ENCODE measurements at regions of chr12 and their contacts with region 1.

Region 1: GRCh38 chr12:5442251-5443006 is 10.5 kb downstream of the NTF3 start:
- DNase-seq: peak in 1 of 2 donors; percentile 59
- ATAC-seq: peak; percentile 63 to 89 (median 81)
- H3K4me3 ChIP-seq: no peak overlapping the region
- H3K27ac ChIP-seq: no peak overlapping the region
- H3K4me1 ChIP-seq: peaks cover 0 to 45% (median 15%) of the 10 kb centered on the region in 9 donors
- H3K27me3 ChIP-seq: peaks cover 0 to 13% (median 0%) of the 10 kb centered on the region in 7 donors
- CTCF ChIP-seq: peak; percentile 36 to 79 (median 66)

Region 2: DNA sequence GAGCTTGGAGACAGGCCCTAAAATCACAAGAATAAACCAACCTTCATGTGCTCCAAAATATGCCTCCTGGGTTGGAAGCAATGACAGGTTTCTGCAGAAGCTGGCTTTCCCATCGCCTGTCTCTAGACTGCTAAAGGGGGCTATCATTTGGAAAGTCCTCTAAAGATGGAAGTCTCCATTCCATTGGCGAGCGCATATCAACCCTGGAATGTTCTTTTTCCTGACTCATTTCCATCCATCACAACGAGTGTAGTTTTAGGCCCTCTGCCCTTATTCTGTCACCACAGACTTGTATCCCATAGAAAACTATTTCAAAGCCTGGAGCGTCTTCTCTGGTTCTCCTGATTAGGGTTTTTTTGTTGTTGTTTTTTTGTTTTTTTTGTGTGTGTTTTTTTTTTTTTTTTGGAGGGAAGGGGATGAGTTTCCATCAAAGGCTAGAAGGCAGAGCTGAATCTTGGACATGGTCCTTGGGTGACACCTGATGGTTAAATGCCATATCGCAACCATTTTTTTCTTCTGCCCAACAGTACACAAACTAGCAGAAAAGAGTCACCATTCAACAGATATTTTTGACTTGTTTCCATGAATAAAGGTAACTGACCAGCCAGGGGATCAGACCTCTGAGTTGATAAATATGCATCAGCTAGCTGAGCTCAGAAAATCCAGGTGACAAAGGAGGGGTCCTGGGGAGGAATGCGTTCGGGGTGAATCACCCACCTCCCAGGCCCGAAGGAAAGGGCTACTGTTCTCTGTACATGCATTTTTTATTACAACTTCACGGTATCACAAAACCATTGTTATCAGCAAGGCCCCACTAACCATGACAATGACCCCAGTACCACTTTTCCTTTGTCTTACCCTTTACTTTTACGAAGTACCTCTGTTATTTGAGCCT is 358.2 kb before region 1 on chr12:
- intact Hi-C with region 1: loop called in 1 of 10 experiments (anchors 5 kb)
- DNase-seq: peak in 1 of 2 donors; percentile 50
- ATAC-seq: peak in 6 of 8 donors; percentile 32 to 71 (median 54)
- H3K4me3 ChIP-seq: no peak overlapping the region
- H3K27ac ChIP-seq: no peak overlapping the region
- H3K4me1 ChIP-seq: peaks cover 0 to 5% (median under 1%) of the 10 kb centered on the region in 9 donors
- H3K27me3 ChIP-seq: peaks cover 0 to 4% (median 0%) of the 10 kb centered on the region in 7 donors
- CTCF ChIP-seq: peak; percentile 53 to 90 (median 82)

Region 3: DNA sequence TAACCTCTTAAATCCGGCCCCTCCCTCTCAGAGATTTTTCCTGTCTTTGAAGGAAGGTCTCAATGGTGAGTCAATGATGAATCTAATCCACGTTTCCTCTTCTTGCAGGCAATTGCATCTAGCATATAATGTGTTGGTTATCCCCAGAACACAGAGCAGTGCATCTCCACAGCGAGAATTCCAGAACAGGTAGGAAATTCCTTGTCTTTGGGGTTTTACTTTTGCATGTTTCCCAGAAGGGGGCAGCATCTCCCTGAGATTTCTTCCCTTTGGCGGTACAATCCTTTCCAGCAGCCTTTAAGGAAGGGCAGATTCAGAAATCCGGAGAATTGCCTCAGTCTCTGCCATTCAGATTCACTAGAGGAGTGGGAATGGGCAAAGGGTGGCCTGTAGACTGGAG is 270.7 kb before region 1 on chr12:
- intact Hi-C with region 1: loop called in 6 of 10 experiments (anchors 2 to 10 kb)
- DNase-seq: peak in 1 of 2 donors; percentile 23
- ATAC-seq: peak in 4 of 8 donors; percentile 13 to 54 (median 47)
- H3K4me3 ChIP-seq: no peak overlapping the region
- H3K27ac ChIP-seq: peak overlapping the region in 2 of 10 donors; percentile 42 to 79
- H3K4me1 ChIP-seq: peaks cover 0 to 26% (median 8%) of the 10 kb centered on the region in 9 donors
- H3K27me3 ChIP-seq: peaks cover 0 to 10% (median 0%) of the 10 kb centered on the region in 7 donors
- CTCF ChIP-seq: peak in 8 of 9 donors; percentile 36 to 67 (median 60)

Region 4: GRCh38 chr12:5506821-5507231 is 64.4 kb after region 1 on chr12:
- intact Hi-C with region 1: loop called in 1 of 10 experiments (anchors 5 kb)
- DNase-seq: peak; percentile 48 to 69
- ATAC-seq: peak; percentile 48 to 90 (median 80)
- H3K4me3 ChIP-seq: no peak overlapping the region
- H3K27ac ChIP-seq: peak overlapping the region in 1 of 10 donors; percentile 10
- H3K4me1 ChIP-seq: peaks cover 0 to 38% (median 16%) of the 10 kb centered on the region in 9 donors
- H3K27me3 ChIP-seq: peaks cover 0 to 25% (median 5%) of the 10 kb centered on the region in 7 donors
- CTCF ChIP-seq: no peak